Activated B cell treated with CpG ODN at 0.5 μM for 24 hours (primary cell): ENCODE measurements at regions of chrX and their contacts with region 1.

Region 1: DNA sequence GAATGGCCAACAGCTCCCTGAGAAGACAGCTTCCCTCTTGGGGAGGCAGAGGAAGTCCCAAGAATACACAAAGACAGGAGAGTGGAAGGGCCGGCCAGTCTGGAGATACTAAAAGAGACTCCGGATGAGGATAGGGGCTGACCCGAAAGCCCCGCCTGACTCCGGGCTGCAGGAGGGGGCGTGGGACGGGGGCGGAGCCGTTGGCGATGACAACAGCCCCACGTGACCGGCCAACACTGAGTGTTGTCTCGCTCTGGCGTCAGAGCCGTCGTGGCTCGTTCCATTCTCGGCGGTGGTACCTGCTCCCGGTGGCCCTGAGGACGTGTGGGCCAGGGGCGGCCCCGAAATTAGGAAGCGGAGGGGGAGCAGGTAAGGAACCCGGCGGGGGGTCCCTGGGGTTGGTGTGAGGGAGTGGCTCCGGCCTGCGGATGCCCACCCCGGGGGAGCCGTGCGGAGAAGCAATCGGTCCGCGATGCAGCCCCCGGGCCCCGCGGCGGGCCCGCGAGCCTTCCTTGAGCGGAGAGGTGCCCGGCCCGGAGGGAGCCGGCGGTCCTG is at the start of gene BEX4:
- DNase-seq: peak; percentile 73
- ATAC-seq: peak; percentile 94
- H3K4me3 Mint-ChIP-seq: peak within 1 kb of the TSS; percentile 87
- H3K27ac Mint-ChIP-seq: peak within 1 kb of the TSS; percentile 75
- H3K4me1 Mint-ChIP-seq: peaks cover 9% of the 10 kb centered on the region
- H3K27me3 Mint-ChIP-seq: peaks cover 6% of the 10 kb centered on the region
- CTCF ChIP-seq: no peak
- total RNA-seq, gene BEX4: 12.1 and 12.9 TPM in 2 replicates

Region 2: DNA sequence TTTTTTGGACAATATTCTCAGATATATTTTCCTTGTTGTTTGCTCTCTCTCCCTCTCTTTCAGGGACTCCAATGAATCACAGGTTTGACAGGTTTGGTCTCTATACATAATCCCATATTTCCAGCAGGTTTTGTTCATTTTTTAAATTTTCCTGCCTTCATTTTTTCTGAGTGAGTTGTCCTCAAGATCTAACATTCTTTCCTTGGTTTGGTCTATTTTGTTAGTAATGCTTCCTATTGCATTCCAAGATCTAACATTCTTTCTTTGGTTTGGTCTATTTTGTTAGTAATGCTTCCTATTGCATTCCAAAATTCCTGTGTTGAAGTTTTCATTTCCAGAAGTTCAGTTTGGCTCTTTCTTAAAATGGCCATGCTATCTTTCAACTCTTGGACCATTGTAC is 1237.8 kb before region 1 on chrX:
- CTCF ChIA-PET with region 1: no interaction called
- POLR2A ChIA-PET with region 1: no interaction called
- intact Hi-C with region 1: no loop called
- DNase-seq: no peak
- ATAC-seq: no peak
- H3K4me3 Mint-ChIP-seq: no peak overlapping the region
- H3K27ac Mint-ChIP-seq: no peak overlapping the region
- H3K4me1 Mint-ChIP-seq: no peaks in the 10 kb centered on the region
- H3K27me3 Mint-ChIP-seq: peaks cover 2% of the 10 kb centered on the region
- CTCF ChIP-seq: no peak

Region 3: GRCh38 chrX:103157496-103158320 is 57.2 kb before region 1 on chrX:
- CTCF ChIA-PET with region 1: no interaction called
- POLR2A ChIA-PET with region 1: no interaction called
- intact Hi-C with region 1: no loop called
- DNase-seq: no peak
- ATAC-seq: no peak
- H3K4me3 Mint-ChIP-seq: no peak overlapping the region
- H3K27ac Mint-ChIP-seq: no peak overlapping the region
- H3K4me1 Mint-ChIP-seq: no peaks in the 10 kb centered on the region
- H3K27me3 Mint-ChIP-seq: no peaks in the 10 kb centered on the region
- CTCF ChIP-seq: no peak

Region 4: DNA sequence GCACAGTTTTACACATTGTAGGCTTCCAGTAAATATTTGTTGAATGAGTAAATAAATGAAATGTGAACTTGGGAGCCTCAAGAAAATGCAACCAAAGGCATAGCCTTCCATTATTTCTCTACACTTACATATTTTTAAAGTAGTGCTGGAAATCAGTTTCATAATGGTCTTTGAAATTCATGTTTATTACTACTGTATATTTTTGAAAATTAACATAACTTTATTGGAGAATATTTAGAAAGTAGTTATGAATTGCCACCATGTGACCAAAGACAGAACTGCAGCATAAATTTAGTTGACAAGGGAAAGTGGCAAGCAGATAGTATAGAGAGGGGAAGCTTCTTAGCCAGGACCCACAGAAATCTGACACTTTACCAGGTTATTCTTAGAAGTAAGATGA is 33.6 kb after region 1 on chrX:
- CTCF ChIA-PET with region 1: interaction called, 4 read pairs
- POLR2A ChIA-PET with region 1: no interaction called
- intact Hi-C with region 1: loop called (anchors 1 kb)
- DNase-seq: no peak
- ATAC-seq: no peak
- H3K4me3 Mint-ChIP-seq: no peak overlapping the region
- H3K27ac Mint-ChIP-seq: no peak overlapping the region
- H3K4me1 Mint-ChIP-seq: peaks cover under 1% of the 10 kb centered on the region
- H3K27me3 Mint-ChIP-seq: no peaks in the 10 kb centered on the region
- CTCF ChIP-seq: no peak

Region 5: DNA sequence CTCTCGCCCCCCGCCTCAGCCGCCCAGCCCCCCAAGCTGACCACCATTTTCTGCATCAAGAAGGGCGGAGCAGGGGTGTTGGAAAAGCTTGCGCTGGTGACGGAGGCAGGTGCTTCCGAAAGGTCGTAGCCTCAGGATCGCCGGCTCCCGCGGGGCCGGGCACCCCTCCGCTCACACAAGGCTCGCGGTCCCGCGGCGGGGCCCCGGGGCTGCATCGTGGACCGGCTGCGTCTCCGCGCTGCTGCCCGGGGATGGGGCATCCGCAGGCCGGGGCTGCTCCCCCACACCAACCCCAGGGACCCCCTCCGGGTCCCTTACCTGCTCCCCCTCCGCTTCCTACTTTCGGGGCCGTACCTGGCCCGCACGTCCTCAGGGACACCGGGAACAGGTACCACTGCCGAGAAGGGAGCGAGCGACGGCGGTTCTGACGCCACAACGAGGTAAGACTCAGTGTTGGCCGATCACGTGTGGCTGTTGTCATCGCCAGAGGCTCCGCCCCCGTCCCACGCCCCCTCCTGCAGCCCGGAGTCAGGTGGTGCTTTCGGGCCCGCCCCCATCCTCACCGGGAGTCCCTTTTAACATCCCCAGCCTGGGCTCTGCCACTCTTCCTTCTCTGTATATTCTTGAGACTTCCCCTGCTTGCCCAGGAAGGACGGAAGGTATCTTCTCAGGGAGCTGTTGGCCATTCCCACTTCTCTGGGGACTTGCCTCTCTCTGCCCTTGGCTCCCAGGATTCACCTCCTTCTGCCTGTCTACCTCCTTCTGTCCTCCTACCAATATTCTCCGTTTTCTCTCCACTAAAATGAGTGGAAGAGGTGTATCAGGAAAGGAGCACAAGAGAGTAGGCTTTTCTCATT is 95.8 kb after region 1 on chrX and contains the start of gene BEX2:
- CTCF ChIA-PET with region 1: no interaction called
- POLR2A ChIA-PET with region 1: no interaction called
- intact Hi-C with region 1: loop called (anchors 2 kb)
- DNase-seq: peak; percentile 66
- ATAC-seq: peak; percentile 98
- H3K4me3 Mint-ChIP-seq: peak within 1 kb of the TSS; percentile 82
- H3K27ac Mint-ChIP-seq: peak within 1 kb of the TSS; percentile 35
- H3K4me1 Mint-ChIP-seq: no peaks in the 10 kb centered on the region
- H3K27me3 Mint-ChIP-seq: no peaks in the 10 kb centered on the region
- CTCF ChIP-seq: no peak
- total RNA-seq, gene BEX2: 12.3 and 13.1 TPM in 2 replicates

Region 6: DNA sequence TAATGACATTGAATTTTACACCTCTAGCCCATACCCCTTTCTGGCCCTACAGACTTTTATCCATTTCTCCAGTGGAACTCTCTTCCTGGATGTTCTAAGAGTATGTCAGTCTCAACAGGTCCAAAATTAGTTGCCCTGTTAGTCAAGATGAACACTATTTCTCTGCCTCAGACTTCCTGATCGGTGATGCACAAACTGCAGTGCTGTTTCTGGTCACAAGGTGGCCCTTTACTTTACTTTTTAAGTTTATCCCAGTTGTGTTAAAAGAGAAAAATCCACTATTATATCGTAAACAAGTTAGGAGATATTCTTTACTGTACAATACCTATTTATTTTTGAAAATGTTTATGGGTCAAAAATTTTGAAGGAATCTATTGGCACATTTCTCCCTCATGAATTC is 128.2 kb after region 1 on chrX:
- CTCF ChIA-PET with region 1: no interaction called
- POLR2A ChIA-PET with region 1: no interaction called
- intact Hi-C with region 1: loop called (anchors 1 kb)
- DNase-seq: no peak
- ATAC-seq: no peak
- H3K4me3 Mint-ChIP-seq: no peak overlapping the region
- H3K27ac Mint-ChIP-seq: no peak overlapping the region
- H3K4me1 Mint-ChIP-seq: no peaks in the 10 kb centered on the region
- H3K27me3 Mint-ChIP-seq: peaks cover 5% of the 10 kb centered on the region
- CTCF ChIP-seq: peak; percentile 14

Region 7: GRCh38 chrX:103464774-103465117 is 249.8 kb after region 1 on chrX:
- CTCF ChIA-PET with region 1: interaction called, 19 read pairs
- POLR2A ChIA-PET with region 1: no interaction called
- intact Hi-C with region 1: loop called (anchors 1 kb)
- DNase-seq: peak; percentile 26
- ATAC-seq: peak; percentile 87
- H3K4me3 Mint-ChIP-seq: peak overlapping the region; percentile 79
- H3K27ac Mint-ChIP-seq: no peak overlapping the region
- H3K4me1 Mint-ChIP-seq: peaks cover 10% of the 10 kb centered on the region
- H3K27me3 Mint-ChIP-seq: no peaks in the 10 kb centered on the region
- CTCF ChIP-seq: no peak

Region 8: DNA sequence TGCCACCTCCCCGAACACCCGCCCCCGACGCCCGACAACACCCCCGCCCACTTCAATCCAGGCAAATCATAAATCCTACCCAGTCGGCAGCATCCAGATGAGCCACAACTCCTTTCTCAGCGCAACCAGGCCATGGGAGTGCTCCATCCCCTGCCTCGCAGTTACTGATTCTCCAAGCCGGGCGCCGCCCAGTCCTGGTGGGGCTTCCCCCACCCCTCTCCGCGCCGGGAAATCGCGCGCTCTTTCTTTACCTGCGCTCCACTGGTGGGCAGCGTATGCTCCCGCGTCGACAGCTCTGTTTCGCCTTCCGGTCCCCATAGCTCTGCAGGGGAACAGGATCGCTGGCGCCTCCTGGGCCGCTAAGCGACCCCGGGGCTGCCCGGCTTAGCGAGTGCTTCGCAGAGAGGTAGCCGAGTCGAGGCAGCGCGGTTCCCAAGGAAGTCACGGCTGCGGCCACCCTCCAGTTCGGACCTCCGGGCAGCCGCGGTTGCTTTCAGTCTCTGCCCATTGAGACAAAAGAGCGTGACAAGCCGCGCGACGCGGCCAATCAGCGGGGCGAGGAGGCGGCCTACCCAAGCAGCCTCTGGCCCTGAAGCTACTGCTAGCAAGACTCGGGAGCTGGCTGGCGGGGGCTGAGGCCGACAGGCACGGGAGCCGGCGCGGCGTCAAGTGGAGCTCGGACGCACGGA is 703.8 kb after region 1 on chrX:
- CTCF ChIA-PET with region 1: no interaction called
- POLR2A ChIA-PET with region 1: no interaction called
- intact Hi-C with region 1: loop called (anchors 5 kb)
- DNase-seq: peak; percentile 45
- ATAC-seq: peak; percentile 70
- H3K4me3 Mint-ChIP-seq: peak overlapping the region; percentile 87
- H3K27ac Mint-ChIP-seq: peak overlapping the region; percentile 84
- H3K4me1 Mint-ChIP-seq: peaks cover 11% of the 10 kb centered on the region
- H3K27me3 Mint-ChIP-seq: no peaks in the 10 kb centered on the region
- CTCF ChIP-seq: no peak

Region 9: DNA sequence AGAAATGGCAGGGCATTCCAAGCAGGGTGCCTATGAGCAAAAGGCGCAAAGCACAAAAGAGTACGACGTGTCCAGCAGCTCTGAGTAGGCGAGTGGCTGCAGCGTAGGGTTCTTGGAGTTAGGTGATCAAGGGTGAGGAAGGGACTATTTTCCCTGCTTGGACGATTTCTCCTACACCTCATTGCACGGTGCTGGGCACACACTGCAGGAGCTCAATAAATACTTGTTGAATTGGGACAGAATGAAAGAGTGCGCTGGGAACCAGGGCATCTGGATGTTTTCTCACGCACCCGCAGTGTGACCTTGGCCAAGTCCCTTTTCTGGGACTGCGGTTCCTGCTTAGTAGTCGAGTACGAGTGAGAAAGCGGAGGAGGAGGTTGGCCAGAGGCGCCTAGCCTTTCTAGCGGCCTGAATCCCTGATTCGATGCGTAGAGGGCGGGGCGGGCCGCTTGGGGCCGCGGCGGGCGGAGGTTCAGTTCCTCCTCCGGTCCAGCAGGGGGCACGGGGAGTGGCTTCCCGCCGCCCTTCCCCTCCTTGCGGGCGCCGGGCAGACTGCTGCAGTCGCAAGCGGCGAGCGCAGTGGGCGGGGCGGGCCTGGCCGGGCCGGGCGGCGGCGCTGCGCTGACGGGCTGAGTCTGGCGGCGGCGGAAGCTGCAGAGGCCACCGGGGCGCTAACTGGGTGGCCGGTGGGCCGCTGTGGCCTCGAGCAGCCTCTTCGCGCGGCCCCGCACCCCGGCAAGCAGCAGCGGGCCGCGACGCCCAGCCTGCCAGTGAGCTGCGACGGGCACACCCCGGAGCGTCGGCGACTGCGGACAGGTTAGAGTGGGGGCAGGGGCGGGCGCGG is 951.2 kb after region 1 on chrX and contains the start of gene FAM199X:
- CTCF ChIA-PET with region 1: no interaction called
- POLR2A ChIA-PET with region 1: no interaction called
- intact Hi-C with region 1: loop called (anchors 10 kb)
- DNase-seq: peak; percentile 76
- ATAC-seq: peak; percentile 98
- H3K4me3 Mint-ChIP-seq: peak within 1 kb of the TSS; percentile 87
- H3K27ac Mint-ChIP-seq: peak within 1 kb of the TSS; percentile 87
- H3K4me1 Mint-ChIP-seq: peaks cover 32% of the 10 kb centered on the region
- H3K27me3 Mint-ChIP-seq: no peaks in the 10 kb centered on the region
- CTCF ChIP-seq: no peak
- total RNA-seq, gene FAM199X: 11.7 and 14.3 TPM in 2 replicates